ENCODE measurements at regions of chr15 and their contacts with region 1.

Region 1: DNA sequence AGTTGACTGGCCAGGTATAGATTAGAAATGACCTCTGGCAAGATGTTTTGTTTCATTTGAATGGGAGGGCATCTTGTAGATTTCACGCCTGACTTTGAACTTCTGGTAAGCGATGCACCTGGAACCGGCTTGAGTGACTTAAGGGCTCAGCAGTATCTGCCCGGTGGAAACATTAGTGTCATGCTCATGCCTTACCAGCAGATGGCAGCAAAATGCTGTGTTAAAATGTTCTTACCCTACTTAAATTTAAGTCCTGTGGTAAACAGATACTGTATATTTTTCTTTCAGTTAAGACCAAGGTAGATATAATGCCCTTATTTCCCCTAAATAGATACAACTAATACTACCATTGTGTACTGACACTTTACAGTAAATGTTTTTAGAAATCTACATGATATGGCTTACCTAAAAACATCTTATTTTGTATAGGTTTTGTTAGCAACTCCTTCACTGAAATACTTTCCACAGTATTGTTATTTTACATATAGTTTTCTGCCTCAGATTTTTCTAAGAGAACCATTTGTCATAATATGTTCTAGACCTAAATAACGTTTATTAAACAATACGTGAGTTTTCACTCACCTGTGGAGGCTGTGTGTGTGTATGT is 25.5 kb downstream of the ASB7 start:
- DNase-seq: peak; percentile 93
- ATAC-seq: peak; percentile 79
- H3K4me3 ChIP-seq: no peak overlapping the region
- H3K27ac ChIP-seq: peak overlapping the region; percentile 85
- H3K4me1 ChIP-seq: peaks cover 30% of the 10 kb centered on the region
- H3K27me3 ChIP-seq: no peaks in the 10 kb centered on the region
- CTCF ChIP-seq: peak; percentile 83

Region 2: GRCh38 chr15:100918034-100918689 is 290.3 kb after region 1 on chr15:
- CTCF ChIA-PET with region 1: no interaction called
- POLR2A ChIA-PET with region 1: no interaction called
- intact Hi-C with region 1: loop called (anchors 5 kb)
- DNase-seq: peak; percentile 89
- ATAC-seq: peak; percentile 66
- H3K4me3 ChIP-seq: peak overlapping the region; percentile 70
- H3K27ac ChIP-seq: peak overlapping the region; percentile 76
- H3K4me1 ChIP-seq: peaks cover 33% of the 10 kb centered on the region
- H3K27me3 ChIP-seq: no peaks in the 10 kb centered on the region
- CTCF ChIP-seq: peak; percentile 91

Measured in PC-3 (cell line).